ENCODE measurements at regions of chr1 and their contacts with region 1.

Region 1: DNA sequence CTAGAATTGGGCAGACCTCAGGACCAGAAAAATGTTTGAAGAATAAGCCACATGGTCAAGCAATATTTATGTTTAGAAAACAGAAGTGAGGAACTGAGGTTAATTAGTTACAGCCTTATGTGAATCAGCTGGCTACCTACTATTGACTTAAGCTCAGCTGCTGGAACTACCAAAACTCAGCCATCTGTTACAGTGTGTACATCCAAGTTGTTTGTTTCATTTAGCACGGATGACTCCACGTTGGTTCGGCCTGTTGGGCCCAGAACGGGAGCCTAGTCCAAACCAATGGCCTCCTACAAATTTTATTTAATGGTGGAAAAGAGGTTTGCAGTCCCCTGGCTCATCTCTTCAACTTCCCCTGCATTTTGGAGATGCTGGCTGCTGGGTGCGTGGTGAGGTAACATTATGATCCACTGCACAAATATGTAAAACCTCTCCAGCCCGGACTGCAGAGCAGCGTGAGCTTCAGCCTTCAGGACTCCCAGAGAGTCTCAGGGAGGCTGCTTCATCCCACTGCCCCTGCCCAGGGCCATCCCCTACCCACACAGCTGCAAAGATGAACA is 143.4 kb downstream of the ZZZ3 start:
- DNase-seq: no peak
- ATAC-seq: peak; percentile 77
- H3K4me3 ChIP-seq: no peak overlapping the region
- H3K27ac ChIP-seq: no peak overlapping the region
- H3K4me1 ChIP-seq: peaks cover 30% of the 10 kb centered on the region
- H3K27me3 ChIP-seq: no peaks in the 10 kb centered on the region
- CTCF ChIP-seq: no peak
- EP300 ChIP-seq: no peak
- POLR2A ChIP-seq: no peak
- RAD21 ChIP-seq: no peak

Region 2: DNA sequence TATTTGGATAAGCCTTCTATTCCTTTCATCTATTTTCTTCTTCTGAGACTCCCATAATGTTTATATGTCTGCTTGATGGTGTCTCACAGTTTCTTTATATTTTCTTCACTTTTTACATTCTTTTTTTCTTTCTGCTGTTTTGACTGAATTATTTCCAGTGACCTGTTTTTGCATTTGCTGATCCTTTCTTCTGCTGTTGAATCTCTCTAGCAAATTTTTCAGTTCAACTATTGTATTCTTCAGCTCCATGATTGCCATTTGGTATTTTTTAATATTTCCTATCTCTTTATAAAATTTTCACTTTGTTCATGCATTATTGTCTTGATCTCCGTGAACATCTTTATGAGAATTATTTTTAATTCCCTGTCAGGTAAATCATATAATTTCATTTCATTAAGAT is 794.0 kb before region 1 on chr1:
- CTCF ChIA-PET with region 1: no interaction called
- POLR2A ChIA-PET with region 1: no interaction called
- RAD21 ChIA-PET with region 1: no interaction called
- SMC1A ChIA-PET with region 1: no interaction called
- in situ Hi-C with region 1: no loop called
- intact Hi-C with region 1: no loop called
- DNase-seq: no peak
- ATAC-seq: no peak
- H3K4me3 ChIP-seq: no peak overlapping the region
- H3K27ac ChIP-seq: no peak overlapping the region
- H3K4me1 ChIP-seq: no peaks in the 10 kb centered on the region
- H3K27me3 ChIP-seq: no peaks in the 10 kb centered on the region
- CTCF ChIP-seq: no peak
- EP300 ChIP-seq: no peak
- POLR2A ChIP-seq: no peak
- RAD21 ChIP-seq: no peak

Region 3: GRCh38 chr1:77504986-77505385 is 34.1 kb before region 1 on chr1:
- CTCF ChIA-PET with region 1: no interaction called
- POLR2A ChIA-PET with region 1: no interaction called
- RAD21 ChIA-PET with region 1: no interaction called
- SMC1A ChIA-PET with region 1: no interaction called
- in situ Hi-C with region 1: no loop called
- intact Hi-C with region 1: no loop called
- DNase-seq: no peak
- ATAC-seq: peak; percentile 56
- H3K4me3 ChIP-seq: no peak overlapping the region
- H3K27ac ChIP-seq: no peak overlapping the region
- H3K4me1 ChIP-seq: no peaks in the 10 kb centered on the region
- H3K27me3 ChIP-seq: no peaks in the 10 kb centered on the region
- CTCF ChIP-seq: no peak
- EP300 ChIP-seq: no peak
- POLR2A ChIP-seq: no peak
- RAD21 ChIP-seq: no peak

Region 4: GRCh38 chr1:77579547-77579946 is 40.5 kb after region 1 on chr1:
- CTCF ChIA-PET with region 1: no interaction called
- POLR2A ChIA-PET with region 1: no interaction called
- RAD21 ChIA-PET with region 1: no interaction called
- SMC1A ChIA-PET with region 1: no interaction called
- in situ Hi-C with region 1: no loop called
- intact Hi-C with region 1: no loop called
- DNase-seq: no peak
- ATAC-seq: no peak
- H3K4me3 ChIP-seq: no peak overlapping the region
- H3K27ac ChIP-seq: no peak overlapping the region
- H3K4me1 ChIP-seq: peaks cover 6% of the 10 kb centered on the region; the same call in 1 of the 2 replicates
- H3K27me3 ChIP-seq: no peaks in the 10 kb centered on the region
- CTCF ChIP-seq: no peak
- EP300 ChIP-seq: no peak
- POLR2A ChIP-seq: no peak
- RAD21 ChIP-seq: no peak

Region 5: GRCh38 chr1:77900687-77901293 is 361.8 kb after region 1 on chr1:
- CTCF ChIA-PET with region 1: interaction called, 5 read pairs
- POLR2A ChIA-PET with region 1: no interaction called
- RAD21 ChIA-PET with region 1: no interaction called
- SMC1A ChIA-PET with region 1: interaction called, 3 read pairs
- in situ Hi-C with region 1: no loop called
- intact Hi-C with region 1: loop called (anchors 10 kb)
- DNase-seq: peak; percentile 11
- ATAC-seq: peak; percentile 82
- H3K4me3 ChIP-seq: no peak overlapping the region
- H3K27ac ChIP-seq: no peak overlapping the region
- H3K4me1 ChIP-seq: no peaks in the 10 kb centered on the region
- H3K27me3 ChIP-seq: no peaks in the 10 kb centered on the region
- CTCF ChIP-seq: peak; percentile 61 to 72 (median 71); a peak in 5 of 6 replicates
- EP300 ChIP-seq: no peak
- POLR2A ChIP-seq: no peak
- RAD21 ChIP-seq: peak; percentile 84